ENCODE measurements at regions of chr2 and their contacts with region 1.

Region 1: DNA sequence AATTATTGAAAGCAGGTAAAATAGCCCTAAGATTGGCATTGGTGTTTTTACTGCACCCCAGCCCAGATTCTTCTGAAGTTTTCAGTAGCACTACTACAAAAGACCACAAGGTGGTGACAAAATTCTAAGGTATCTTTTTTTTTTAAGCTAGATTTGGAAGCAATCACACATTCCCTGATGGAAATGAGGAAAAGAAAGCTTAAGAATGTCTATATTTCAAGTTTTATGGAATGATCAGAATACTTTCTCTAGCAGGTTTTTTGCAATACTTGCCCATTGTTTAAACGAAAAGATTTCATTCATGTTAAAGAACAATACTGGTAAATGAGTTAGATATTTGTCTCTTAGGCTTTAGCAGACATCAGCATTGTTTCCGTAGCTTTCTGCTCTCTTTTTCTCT is 32.1 kb upstream of the ZNF638 start:
- DNase-seq: no peak
- H3K4me3 ChIP-seq: no peak overlapping the region
- H3K27ac ChIP-seq: no peak overlapping the region
- H3K4me1 ChIP-seq: no peaks in the 10 kb centered on the region
- H3K27me3 ChIP-seq: no peaks in the 10 kb centered on the region
- CTCF ChIP-seq: peak; percentile 78

Region 2: GRCh38 chr2:71510196-71510807 is 210.8 kb after region 1 on chr2:
- intact Hi-C with region 1: loop called (anchors 2 kb)
- DNase-seq: peak; percentile 61
- H3K4me3 ChIP-seq: no peak overlapping the region
- H3K27ac ChIP-seq: no peak overlapping the region
- H3K4me1 ChIP-seq: no peaks in the 10 kb centered on the region
- H3K27me3 ChIP-seq: no peaks in the 10 kb centered on the region
- CTCF ChIP-seq: peak; percentile 81